ENCODE measurements at regions of chr21 and their contacts with region 1.

Region 1: GRCh38 chr21:32727687-32728455 is at the start of gene SYNJ1:
- DNase-seq: peak; percentile 81 to 98 (median 96)

Region 2: DNA sequence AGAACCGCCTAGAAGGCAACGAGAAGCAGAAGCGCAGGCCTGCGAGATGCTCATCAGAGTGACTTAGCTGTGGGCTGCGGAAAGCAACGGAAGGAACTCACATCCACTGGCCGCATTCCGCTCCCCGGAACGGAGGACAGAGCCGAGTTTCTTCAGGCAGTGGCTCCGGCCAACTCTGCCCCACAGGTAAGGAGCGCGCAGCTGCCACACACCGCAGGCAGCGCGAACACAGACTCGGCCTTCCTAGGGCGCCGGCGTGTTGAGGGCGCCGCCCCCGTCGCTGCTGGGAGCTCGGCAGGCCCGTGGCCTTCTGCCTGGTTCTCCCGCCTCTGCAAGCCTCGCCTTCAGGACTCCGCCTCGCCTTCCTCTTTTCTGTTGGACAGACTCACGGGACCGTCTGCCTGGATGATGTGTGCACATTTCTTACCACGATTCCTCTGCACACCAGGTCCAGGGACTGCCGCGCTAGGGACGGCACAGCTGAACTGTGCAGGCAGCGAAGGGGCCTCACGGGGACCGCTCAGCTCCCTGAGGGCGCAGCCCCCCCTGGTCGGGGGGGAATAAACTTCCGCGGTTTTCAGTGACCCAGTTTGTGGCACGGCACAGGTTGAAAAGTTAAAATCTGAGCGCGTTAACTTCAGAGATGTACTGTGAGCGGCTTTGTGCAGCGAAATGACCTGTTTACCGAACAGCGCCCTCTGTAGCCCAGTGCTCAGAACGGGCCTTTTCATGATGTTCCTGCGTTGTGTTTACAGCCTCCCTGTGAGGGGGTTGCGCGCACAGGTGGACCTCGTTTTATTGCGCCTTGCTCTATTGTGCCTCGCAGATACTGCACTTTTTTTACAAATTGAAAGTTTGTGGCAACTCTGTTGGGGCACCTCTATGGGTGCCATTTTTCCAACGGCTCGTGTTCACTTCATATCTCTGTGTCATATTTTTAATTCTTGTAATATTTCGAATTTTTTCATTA is 158.3 kb before region 1 on chr21:
- intact Hi-C with region 1: no loop called
- DNase-seq: peak; percentile 20 to 89 (median 70)

Region 3: DNA sequence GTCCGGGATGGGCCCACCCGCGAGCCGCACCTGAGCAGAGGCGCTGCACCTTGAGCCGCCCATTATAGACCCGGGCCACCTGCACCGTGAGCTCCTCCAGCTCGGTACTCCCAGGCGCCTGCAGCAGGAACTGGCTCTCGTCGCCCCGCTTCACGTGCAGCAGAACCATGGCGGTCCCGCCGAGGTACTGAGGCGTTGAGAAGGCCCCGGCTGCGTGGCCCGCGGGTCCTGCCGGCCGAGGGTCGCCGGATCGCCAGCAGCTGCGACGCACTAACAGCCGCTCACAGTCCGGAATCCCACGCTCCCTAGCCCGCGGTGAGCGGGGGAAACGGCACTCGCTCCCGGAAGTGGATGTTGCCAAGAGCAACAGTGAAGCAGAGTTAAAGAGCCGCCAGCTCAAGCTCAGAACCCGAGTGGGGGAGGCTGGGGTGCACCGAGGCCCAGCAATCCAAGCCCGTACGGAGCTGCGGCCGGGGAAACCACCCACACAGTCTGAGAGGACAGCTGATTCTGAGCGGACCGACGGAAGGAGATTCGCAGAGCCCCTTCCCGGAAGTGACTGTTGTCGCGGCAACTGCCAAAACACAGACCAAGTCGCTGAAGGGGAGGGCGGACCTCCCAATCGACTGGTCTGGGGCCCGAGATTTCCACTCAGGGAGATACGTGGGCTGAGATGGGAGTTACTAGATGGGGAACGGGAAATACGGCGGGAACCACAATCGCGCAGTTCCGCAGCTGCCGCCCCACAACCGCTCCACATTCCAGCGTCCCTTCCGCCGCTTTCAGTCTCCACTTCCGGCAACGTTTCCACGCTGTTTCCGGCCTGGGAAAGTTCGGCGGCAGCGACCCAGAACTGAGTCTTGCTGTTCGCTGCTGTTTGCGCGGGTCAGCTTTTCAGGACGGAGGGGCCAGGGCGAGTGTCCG is 115.5 kb before region 1 on chr21 and contains the start of gene CFAP298:
- intact Hi-C with region 1: loop called (anchors 5 kb)
- DNase-seq: peak; percentile 81 to 95 (median 90)

Region 4: GRCh38 chr21:32770871-32771523 is 43.1 kb after region 1 on chr21:
- intact Hi-C with region 1: loop called (anchors 2 kb)
- DNase-seq: peak in 37 of 42 donors; percentile 6 to 61 (median 33)

Region 5: DNA sequence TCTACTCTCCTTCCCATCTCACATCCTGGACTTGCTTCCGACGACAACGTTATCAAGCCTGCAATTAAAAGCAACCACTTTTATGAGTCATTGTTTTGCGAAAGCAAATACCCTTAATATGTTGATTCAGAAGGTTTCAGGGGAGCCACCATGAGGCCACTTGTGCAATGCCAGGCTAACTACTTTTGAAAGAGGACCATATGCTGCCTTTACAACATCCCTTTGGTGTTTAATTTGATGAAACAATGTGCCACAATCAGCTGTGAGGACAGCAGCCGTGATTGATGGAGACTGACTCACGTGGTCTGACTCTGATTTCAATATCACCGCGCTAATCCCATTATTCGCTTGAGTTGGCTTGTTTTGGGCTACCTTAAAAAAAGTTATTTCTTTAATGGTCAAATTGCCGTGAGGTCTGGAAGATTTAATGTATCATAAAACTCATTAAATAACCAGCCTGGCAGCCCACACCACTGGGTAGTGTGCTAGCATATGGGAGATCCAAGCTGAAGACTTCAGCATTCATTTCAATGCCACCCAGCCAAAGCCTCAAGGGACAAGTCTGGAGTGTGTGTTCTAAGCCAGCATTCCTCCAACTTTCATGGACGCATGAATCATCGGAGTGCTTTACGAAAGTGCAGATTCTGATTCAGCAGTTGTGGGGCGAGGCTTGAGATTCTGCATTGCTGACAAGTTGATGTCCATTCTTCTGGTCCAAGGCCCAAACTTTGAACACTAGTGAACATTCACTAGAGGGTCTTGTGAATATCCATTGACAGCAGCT is 117.0 kb after region 1 on chr21:
- intact Hi-C with region 1: no loop called
- DNase-seq: no peak

Measured in head of caudate nucleus (tissue), 42 donors.